SK-N-SH (cell line): ENCODE measurements at regions of chr18 and their contacts with region 1.

Region 1: DNA sequence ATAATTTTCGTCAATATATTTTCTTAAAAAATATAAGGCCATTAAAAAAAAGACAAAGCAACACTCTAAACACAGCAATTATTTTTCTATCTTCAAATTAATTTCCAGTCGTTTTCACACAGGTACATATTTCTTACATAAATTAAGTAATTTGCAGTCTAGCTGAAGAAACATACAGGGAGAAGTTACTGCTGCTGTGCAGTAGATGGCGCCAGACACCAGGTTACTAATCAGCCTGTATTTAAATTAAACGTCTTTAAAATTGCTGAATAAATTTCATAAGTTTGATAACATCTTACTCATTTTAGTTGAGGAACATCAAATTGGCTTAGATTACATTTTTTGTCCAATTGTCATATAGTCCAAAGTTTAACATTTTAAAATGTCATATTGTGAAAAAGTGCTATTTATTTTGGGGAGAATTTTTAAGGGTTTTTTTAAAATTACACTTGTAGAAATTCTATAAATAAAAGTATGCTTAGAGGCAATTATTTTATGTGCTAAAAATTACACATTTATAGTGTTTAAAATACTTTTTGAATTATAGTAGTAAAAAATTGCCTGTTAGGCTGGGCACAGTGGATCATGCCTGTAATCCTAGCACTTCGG is 88.4 kb downstream of the PMAIP1 start:
- DNase-seq: peak; percentile 38
- H3K4me3 ChIP-seq: peak overlapping the region in 1 of 2 experiments; percentile 14; a peak in 1 of 4 replicates
- H3K27ac ChIP-seq: no peak overlapping the region
- H3K4me1 ChIP-seq: no peaks in the 10 kb centered on the region; a peak in 1 of 4 replicates
- H3K27me3 ChIP-seq: no peaks in the 10 kb centered on the region
- CTCF ChIP-seq: peak; percentile 99
- EP300 ChIP-seq: no peak
- RAD21 ChIP-seq: peak; percentile 97

Region 2: GRCh38 chr18:59899298-59900221 is 88.6 kb before region 1 on chr18 and contains the start of gene PMAIP1:
- CTCF ChIA-PET with region 1: interaction called, 11 read pairs
- POLR2A ChIA-PET with region 1: interaction called, 7 read pairs
- DNase-seq: peak; percentile 96
- H3K4me3 ChIP-seq: peak within 1 kb of the TSS; percentile 83
- H3K27ac ChIP-seq: peak within 1 kb of the TSS; percentile 91 to 95
- H3K4me1 ChIP-seq: peaks cover 18% of the 10 kb centered on the region in 2 experiments; a peak in 3 of 4 replicates
- H3K27me3 ChIP-seq: no peaks in the 10 kb centered on the region
- CTCF ChIP-seq: no peak
- EP300 ChIP-seq: peak in 1 of 2 experiments; percentile 29; a peak in 1 of 4 replicates
- RAD21 ChIP-seq: no peak
- polyA plus RNA-seq, gene PMAIP1: 74.5 and 76.9 TPM in 2 replicates

Region 3: GRCh38 chr18:60534538-60534937 is 546.3 kb after region 1 on chr18:
- CTCF ChIA-PET with region 1: interaction called, 10 read pairs
- POLR2A ChIA-PET with region 1: no interaction called
- DNase-seq: no peak
- H3K4me3 ChIP-seq: no peak overlapping the region
- H3K27ac ChIP-seq: no peak overlapping the region
- H3K4me1 ChIP-seq: no peaks in the 10 kb centered on the region; a peak in 1 of 4 replicates
- H3K27me3 ChIP-seq: no peaks in the 10 kb centered on the region
- CTCF ChIP-seq: no peak
- EP300 ChIP-seq: no peak
- RAD21 ChIP-seq: no peak

Region 4: GRCh38 chr18:60554967-60555366 is 566.8 kb after region 1 on chr18:
- CTCF ChIA-PET with region 1: interaction called, 31 read pairs
- POLR2A ChIA-PET with region 1: no interaction called
- DNase-seq: no peak
- H3K4me3 ChIP-seq: no peak overlapping the region
- H3K27ac ChIP-seq: no peak overlapping the region
- H3K4me1 ChIP-seq: no peaks in the 10 kb centered on the region
- H3K27me3 ChIP-seq: 0 out of 2 replicates have a peak, but pooled peaks cover 4% of the 10 kb centered on the region
- CTCF ChIP-seq: no peak
- EP300 ChIP-seq: no peak
- RAD21 ChIP-seq: no peak